Activated CD4-positive, alpha-beta T cell treated with anti-CD3 and anti-CD28 coated beads for 36 hours (primary cell): ENCODE measurements at regions of chr12 and their contacts with region 1.

Region 1: GRCh38 chr12:89451841-89452251 is 72.8 kb downstream of the GALNT4 start:
- DNase-seq: no peak
- ATAC-seq: no peak
- H3K4me3 Mint-ChIP-seq: no peak overlapping the region
- H3K27ac Mint-ChIP-seq: no peak overlapping the region
- H3K4me1 Mint-ChIP-seq: peaks cover 4% of the 10 kb centered on the region
- H3K27me3 Mint-ChIP-seq: no peaks in the 10 kb centered on the region

Region 2: GRCh38 chr12:89461649-89462612 is 10.1 kb after region 1 on chr12:
- CTCF ChIA-PET with region 1: interaction called, 18 read pairs
- POLR2A ChIA-PET with region 1: no interaction called
- intact Hi-C with region 1: no loop called
- DNase-seq: no peak
- ATAC-seq: peak; percentile 93
- H3K4me3 Mint-ChIP-seq: peak overlapping the region; percentile 13
- H3K27ac Mint-ChIP-seq: peak overlapping the region; percentile 68
- H3K4me1 Mint-ChIP-seq: peaks cover 20% of the 10 kb centered on the region
- H3K27me3 Mint-ChIP-seq: no peaks in the 10 kb centered on the region